Common myeloid progenitor, CD34-positive (primary cell): ENCODE measurements at regions of chr9 and their contacts with region 1.

Region 1: GRCh38 chr9:98118640-98119601 is at the start of gene TRIM14:
- DNase-seq: peak in 2 of 3 donors; percentile 55 to 76
- H3K4me3 ChIP-seq: peak within 1 kb of the TSS; percentile 66 to 88 (median 76)
- H3K27ac ChIP-seq: peak within 1 kb of the TSS; percentile 1 to 69
- H3K4me1 ChIP-seq: peaks cover 7 to 38% (median 25%) of the 10 kb centered on the region in 4 experiments
- H3K27me3 ChIP-seq: no peaks in the 10 kb centered on the region

Region 2: DNA sequence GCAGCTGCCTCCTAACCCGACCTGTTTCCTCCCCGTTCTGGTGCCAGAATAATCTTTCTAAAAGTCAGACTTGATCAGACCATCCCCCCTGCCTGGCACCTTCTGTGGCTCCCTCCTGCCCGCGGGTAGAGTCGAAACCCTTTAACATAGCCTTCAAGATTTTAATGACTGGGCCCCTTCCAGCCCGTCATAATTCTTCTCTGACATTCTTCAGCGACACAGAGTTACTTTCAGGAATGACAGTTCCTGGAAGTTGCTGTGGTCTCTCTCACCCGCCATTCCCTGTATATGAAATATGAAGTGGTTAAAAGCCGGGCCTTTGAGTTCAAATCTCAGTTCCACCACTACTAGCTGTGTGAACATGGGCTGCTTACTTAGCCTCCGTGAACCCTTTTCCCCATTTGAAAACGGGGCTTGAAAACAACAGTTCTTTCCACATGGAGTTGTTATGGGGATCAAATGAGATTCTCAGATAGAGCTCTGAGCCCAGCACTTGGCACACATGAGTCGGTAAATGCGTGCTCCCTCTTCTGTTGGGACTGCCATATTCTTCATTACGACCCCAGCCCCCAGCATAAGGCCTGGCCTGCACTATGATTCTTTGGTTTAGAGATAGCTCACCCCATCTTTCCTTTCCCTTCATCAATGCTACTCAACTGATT is 61.7 kb before region 1 on chr9:
- CTCF ChIA-PET with region 1: no interaction called
- POLR2A ChIA-PET with region 1: no interaction called
- DNase-seq: peak in 2 of 3 donors; percentile 72 to 79
- H3K4me3 ChIP-seq: peak overlapping the region; percentile 62 to 92 (median 80)
- H3K27ac ChIP-seq: peak overlapping the region; percentile 54 to 89
- H3K4me1 ChIP-seq: peaks cover 0 to 21% (median 18%) of the 10 kb centered on the region in 4 experiments
- H3K27me3 ChIP-seq: no peaks in the 10 kb centered on the region

Region 3: DNA sequence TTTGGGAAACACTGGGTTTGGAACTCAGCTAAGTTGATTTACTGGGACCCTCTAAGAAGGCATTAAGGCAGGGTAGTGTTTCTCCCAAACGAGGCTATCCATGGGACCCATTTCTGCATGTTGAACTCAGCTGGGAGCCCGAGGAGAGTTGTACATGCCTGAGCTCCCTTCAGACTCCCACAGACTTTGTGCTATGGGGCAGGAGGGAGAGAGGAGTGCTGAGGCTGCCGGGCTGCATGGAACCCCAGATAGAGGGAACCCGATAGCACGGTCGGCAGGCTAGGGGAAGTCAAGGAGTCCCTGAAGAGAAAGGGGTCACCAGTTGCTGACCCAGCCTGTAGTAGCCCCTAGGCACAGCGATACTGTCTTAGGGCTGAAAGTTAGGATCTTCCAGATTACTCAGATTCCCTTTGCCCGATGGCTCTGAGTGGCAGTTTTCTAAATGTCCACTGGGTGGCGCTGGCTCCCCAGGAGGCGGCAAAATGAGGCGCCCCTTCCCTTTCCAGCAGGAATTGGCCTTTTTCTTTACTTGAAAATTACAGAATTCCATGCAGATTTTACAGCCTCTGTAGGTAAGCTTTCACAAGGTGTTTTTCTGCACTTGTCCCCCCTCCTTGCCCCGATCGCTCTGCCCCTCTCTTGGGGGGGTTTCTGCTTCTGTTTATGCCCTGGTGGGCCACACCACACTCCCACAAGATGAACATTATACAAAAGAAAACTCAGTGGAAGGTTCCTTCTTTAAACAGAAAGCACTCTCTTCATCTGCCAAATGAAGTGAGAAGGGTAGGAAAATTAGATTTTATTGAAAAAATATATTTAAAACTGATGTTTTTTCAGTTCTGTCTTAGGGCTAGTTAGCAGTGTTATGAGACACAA is 44.6 kb before region 1 on chr9:
- CTCF ChIA-PET with region 1: interaction called, 11 read pairs
- POLR2A ChIA-PET with region 1: no interaction called
- DNase-seq: peak; percentile 42 to 62 (median 54)
- H3K4me3 ChIP-seq: no peak overlapping the region
- H3K27ac ChIP-seq: no peak overlapping the region
- H3K4me1 ChIP-seq: peaks cover 0 to 20% (median 13%) of the 10 kb centered on the region in 4 experiments
- H3K27me3 ChIP-seq: no peaks in the 10 kb centered on the region

Region 4: DNA sequence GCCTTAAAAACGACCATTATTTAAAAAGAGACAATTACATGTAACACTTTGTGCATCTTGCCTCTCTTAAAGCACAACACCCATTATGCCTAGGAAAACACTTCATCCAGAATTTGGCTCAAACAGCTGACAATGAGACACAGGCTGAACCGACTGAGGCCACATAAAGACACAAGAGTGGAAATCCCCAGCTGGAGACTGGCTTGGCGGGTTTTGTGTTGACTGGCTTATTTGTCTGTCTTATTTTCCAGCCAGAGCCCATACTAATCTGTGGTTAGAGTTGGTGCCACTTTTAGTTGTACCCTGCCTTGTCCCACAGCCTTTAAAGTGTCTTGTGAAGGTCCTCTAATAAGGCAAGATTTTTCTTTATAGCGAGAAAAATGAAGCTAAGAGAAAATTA is 21.1 kb before region 1 on chr9:
- CTCF ChIA-PET with region 1: interaction called, 10 read pairs
- POLR2A ChIA-PET with region 1: interaction called, 3 read pairs
- DNase-seq: peak in 1 of 3 donors; percentile 15
- H3K4me3 ChIP-seq: no peak overlapping the region
- H3K27ac ChIP-seq: no peak overlapping the region
- H3K4me1 ChIP-seq: peaks cover 17 to 34% (median 31%) of the 10 kb centered on the region in 4 experiments
- H3K27me3 ChIP-seq: no peaks in the 10 kb centered on the region

Region 5: DNA sequence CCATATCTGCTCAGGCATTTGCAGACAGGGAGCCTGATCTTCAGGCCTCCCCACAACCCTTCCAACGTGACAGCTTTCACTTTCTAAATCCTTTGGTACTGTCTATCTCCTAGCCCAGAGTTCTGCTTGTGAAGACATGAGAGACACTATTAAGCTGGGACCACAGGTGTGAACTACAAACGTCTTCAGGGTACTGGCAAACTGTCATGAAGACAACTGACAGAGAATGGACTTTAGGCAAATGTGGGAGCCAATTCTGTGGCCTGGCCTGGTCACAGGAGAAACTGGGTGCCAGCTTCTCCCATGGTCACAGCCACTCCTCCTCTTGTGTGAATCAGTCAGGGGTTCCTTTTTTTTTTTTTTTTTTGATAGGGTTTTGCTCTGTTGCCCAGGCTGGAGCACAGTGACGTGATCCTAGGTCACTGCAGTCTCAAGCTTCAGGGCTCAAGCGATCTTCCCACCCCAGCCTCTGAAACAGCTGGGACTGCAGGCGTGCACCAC is 10.3 kb before region 1 on chr9:
- CTCF ChIA-PET with region 1: interaction called, 31 read pairs
- POLR2A ChIA-PET with region 1: interaction called, 7 read pairs
- DNase-seq: peak; percentile 62 to 86 (median 79)
- H3K4me3 ChIP-seq: peak overlapping the region in 5 of 7 experiments; percentile 13 to 32 (median 14)
- H3K27ac ChIP-seq: peak overlapping the region; percentile 64 to 76
- H3K4me1 ChIP-seq: peaks cover 0 to 61% (median 49%) of the 10 kb centered on the region in 4 experiments
- H3K27me3 ChIP-seq: no peaks in the 10 kb centered on the region

Region 6: DNA sequence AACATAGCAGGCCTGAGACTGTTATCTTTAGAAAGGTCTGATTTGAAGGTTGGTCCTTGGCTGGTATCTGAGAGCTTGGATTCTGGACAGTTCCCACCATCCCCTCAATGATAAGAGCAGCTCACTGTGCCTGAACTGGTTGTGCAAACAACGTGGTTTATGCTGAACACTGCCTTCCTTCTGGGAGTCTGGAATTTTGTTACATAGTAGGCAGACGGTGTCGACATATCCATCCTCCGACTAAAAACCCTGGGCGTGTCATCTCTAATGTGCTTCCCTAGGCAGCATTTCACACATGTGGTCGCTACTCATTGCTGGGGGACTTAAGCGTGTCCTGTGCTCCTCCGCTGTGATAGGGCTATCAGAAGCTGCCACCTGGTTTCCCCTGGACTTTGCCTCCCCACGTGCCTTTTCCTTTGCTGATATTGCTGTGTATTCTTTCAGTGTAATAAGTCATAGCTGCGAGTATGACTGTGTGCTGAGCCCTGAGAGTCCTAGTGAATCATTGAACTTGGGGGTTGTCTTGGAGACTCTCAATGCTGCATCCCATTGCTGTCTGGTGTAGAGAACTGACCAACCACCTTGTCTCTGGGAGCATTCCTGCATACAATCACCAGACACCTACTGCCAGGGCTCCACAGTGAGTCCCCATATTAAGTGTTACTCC is 255.6 kb after region 1 on chr9:
- CTCF ChIA-PET with region 1: no interaction called
- POLR2A ChIA-PET with region 1: no interaction called
- DNase-seq: peak in 2 of 3 donors; percentile 13 to 45
- H3K4me3 ChIP-seq: no peak overlapping the region
- H3K27ac ChIP-seq: no peak overlapping the region
- H3K4me1 ChIP-seq: peaks cover 0 to 3% (median 0%) of the 10 kb centered on the region in 4 experiments
- H3K27me3 ChIP-seq: peaks cover 0 to 1% (median 0%) of the 10 kb centered on the region in 5 experiments